ENCODE measurements at regions of chr2 and their contacts with region 1.

Region 1: DNA sequence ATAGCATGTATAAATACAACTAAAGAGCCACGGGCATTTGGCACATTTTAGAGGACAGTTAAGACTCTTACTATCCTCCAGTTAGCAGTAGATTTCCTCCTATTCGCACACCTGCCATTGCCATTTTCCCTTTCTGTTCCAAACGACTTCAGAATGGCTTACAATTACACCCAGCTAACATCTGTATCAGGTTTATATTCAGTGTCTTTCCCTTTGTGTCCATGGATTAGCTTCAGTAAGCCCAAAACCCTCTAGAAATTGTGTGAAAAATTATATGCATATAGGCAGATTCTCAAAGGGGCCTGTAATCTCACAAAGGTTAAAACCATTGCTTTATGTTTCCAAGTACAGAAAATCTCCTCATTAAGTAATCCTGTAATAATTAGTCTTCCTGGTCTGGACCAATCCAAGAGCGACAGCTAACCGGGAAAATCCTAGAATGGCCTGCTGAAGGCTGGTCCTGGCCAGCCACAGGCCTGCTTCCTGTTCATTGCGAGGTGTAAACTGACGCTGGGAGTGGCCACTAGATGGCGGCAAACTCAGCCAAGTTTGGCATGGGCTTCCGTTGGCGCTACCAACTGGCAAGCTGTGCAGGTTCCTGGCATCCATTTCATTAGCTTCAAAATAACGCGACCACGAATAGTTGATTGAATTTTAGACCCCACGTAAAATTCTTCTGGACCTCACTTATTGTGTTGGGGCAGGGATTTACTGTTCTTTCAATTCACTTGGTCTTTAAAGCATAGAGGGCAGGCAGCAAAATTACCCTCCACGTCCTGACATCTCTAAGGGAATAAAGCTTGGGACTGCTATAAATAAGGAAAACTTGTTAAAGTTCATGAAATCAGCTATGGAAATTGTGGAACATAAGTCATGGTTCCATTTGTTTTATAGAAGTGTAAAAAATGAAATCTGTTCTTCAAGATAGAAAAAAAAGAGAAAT is 17.1 kb downstream of the ARHGAP25 start:
- DNase-seq: peak; percentile 88 to 96 (median 90)
- ATAC-seq: peak; percentile 91
- H3K4me3 ChIP-seq: no peak overlapping the region
- H3K4me3 Mint-ChIP-seq: peak overlapping the region; percentile 12
- H3K27ac ChIP-seq: peak overlapping the region; percentile 52 to 66
- H3K27ac Mint-ChIP-seq: peak overlapping the region; percentile 94
- H3K4me1 ChIP-seq: peaks cover 81% of the 10 kb centered on the region
- H3K4me1 Mint-ChIP-seq: peaks cover 86% of the 10 kb centered on the region
- H3K27me3 ChIP-seq: no peaks in the 10 kb centered on the region
- H3K27me3 Mint-ChIP-seq: no peaks in the 10 kb centered on the region
- CTCF ChIP-seq: peak; percentile 93

Region 2: GRCh38 chr2:68715353-68716041 is 36.2 kb before region 1 on chr2:
- CTCF ChIA-PET with region 1: interaction called, 22 read pairs
- POLR2A ChIA-PET with region 1: interaction called, 26 read pairs
- intact Hi-C with region 1: loop called (anchors 5 kb)
- DNase-seq: peak in 4 of 14 experiments; percentile 40 to 78 (median 67)
- ATAC-seq: peak; percentile 44
- H3K4me3 ChIP-seq: no peak overlapping the region
- H3K4me3 Mint-ChIP-seq: no peak overlapping the region
- H3K27ac ChIP-seq: peak overlapping the region in 1 of 2 donors; percentile 65
- H3K27ac Mint-ChIP-seq: peak overlapping the region; percentile 83
- H3K4me1 ChIP-seq: peaks cover 51% of the 10 kb centered on the region
- H3K4me1 Mint-ChIP-seq: peaks cover 82% of the 10 kb centered on the region
- H3K27me3 ChIP-seq: no peaks in the 10 kb centered on the region
- H3K27me3 Mint-ChIP-seq: no peaks in the 10 kb centered on the region
- CTCF ChIP-seq: no peak

Region 3: DNA sequence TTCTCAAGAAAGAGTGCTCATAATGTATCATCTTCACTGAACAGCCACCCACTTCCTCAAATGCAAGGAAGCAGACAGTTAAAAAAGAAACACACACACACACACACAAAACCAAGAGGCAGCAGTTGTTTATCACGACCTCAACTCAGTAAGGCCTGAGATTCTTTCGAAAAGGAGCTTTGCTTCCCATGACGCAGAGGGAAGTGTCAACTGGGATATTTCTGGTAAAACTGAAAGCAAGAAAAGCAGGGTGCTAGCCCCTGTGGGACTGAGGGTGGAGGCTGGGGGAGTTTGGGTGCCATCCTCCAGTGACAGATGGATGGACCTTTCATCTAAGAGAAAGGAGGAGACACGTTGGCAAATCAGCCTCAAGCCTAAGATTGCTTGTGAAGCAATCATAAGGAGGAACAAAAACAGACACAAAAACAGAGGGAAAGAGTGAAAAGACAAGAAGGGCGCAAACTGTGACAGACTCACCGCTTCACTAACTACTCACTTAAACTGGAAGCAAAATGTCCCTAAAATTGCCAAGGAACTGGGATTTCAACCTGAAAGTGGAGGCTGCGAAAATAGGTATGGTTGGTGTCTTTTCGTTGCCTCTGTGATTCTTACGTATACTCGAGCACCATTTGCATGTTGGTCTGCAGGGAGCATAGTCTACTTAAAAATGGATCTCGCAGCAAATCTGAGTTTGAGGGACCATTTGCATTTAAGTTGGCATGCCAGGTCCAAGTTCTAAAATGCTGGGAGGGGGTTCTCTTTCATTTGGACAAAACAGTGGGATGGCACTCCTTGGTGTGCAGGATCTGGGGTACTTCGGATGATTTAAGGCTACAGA is 16.8 kb before region 1 on chr2 and contains the start of gene ARHGAP25:
- CTCF ChIA-PET with region 1: interaction called, 63 read pairs
- POLR2A ChIA-PET with region 1: interaction called, 31 read pairs
- intact Hi-C with region 1: loop called in 1 of 2 experiments (anchors 1 kb)
- DNase-seq: peak in 10 of 14 experiments; percentile 23 to 87 (median 45)
- ATAC-seq: peak; percentile 71
- H3K4me3 ChIP-seq: peak within 1 kb of the TSS; percentile 73
- H3K4me3 Mint-ChIP-seq: no peak within 1 kb of the TSS
- H3K27ac ChIP-seq: peak within 1 kb of the TSS; percentile 72 to 81
- H3K27ac Mint-ChIP-seq: no peak within 1 kb of the TSS
- H3K4me1 ChIP-seq: peaks cover 49% of the 10 kb centered on the region
- H3K4me1 Mint-ChIP-seq: peaks cover 40% of the 10 kb centered on the region
- H3K27me3 ChIP-seq: no peaks in the 10 kb centered on the region
- H3K27me3 Mint-ChIP-seq: no peaks in the 10 kb centered on the region
- CTCF ChIP-seq: no peak
- total RNA-seq, gene ARHGAP25: 39.3 to 41.8 TPM

Region 4: GRCh38 chr2:68789603-68790002 is 37.9 kb after region 1 on chr2:
- CTCF ChIA-PET with region 1: interaction called, 18 read pairs
- POLR2A ChIA-PET with region 1: interaction called, 7 read pairs
- intact Hi-C with region 1: no loop called
- DNase-seq: peak in 2 of 14 experiments; percentile 28 to 53
- ATAC-seq: peak; percentile 26
- H3K4me3 ChIP-seq: no peak overlapping the region
- H3K4me3 Mint-ChIP-seq: no peak overlapping the region
- H3K27ac ChIP-seq: no peak overlapping the region
- H3K27ac Mint-ChIP-seq: peak overlapping the region; percentile 91
- H3K4me1 ChIP-seq: peaks cover 45% of the 10 kb centered on the region
- H3K4me1 Mint-ChIP-seq: peaks cover 49% of the 10 kb centered on the region
- H3K27me3 ChIP-seq: no peaks in the 10 kb centered on the region
- H3K27me3 Mint-ChIP-seq: no peaks in the 10 kb centered on the region
- CTCF ChIP-seq: no peak

Region 5: GRCh38 chr2:68837164-68837860 is 85.6 kb after region 1 on chr2:
- CTCF ChIA-PET with region 1: interaction called, 24 read pairs
- POLR2A ChIA-PET with region 1: interaction called, 5 read pairs
- intact Hi-C with region 1: loop called (anchors 1 kb)
- DNase-seq: peak; percentile 54 to 86 (median 70)
- ATAC-seq: peak; percentile 85
- H3K4me3 ChIP-seq: no peak overlapping the region
- H3K4me3 Mint-ChIP-seq: no peak overlapping the region
- H3K27ac ChIP-seq: no peak overlapping the region
- H3K27ac Mint-ChIP-seq: peak overlapping the region; percentile 4
- H3K4me1 ChIP-seq: peaks cover 27% of the 10 kb centered on the region
- H3K4me1 Mint-ChIP-seq: peaks cover 38% of the 10 kb centered on the region
- H3K27me3 ChIP-seq: no peaks in the 10 kb centered on the region
- H3K27me3 Mint-ChIP-seq: no peaks in the 10 kb centered on the region
- CTCF ChIP-seq: peak; percentile 84

Region 6: DNA sequence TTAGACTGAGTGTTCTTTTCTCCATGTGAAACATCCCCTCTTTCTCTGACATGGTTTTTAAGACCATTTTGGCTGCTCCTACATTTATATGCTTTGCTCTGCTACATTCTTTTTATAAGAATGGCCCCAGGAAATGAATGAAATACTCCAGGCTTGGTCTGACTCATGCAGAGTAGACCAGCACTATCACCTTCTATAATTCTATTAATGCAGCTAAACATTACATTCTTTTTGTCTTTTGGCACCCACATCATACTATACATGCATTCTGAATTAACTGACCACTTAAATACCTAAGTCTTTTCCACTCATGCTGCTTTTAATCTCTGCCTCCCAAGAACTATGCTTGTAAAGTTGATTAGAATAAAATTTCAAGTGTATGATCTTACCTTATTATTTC is 797.8 kb after region 1 on chr2:
- CTCF ChIA-PET with region 1: no interaction called
- POLR2A ChIA-PET with region 1: no interaction called
- intact Hi-C with region 1: no loop called
- DNase-seq: no peak
- ATAC-seq: no peak
- H3K4me3 ChIP-seq: no peak overlapping the region
- H3K4me3 Mint-ChIP-seq: no peak overlapping the region
- H3K27ac ChIP-seq: no peak overlapping the region
- H3K27ac Mint-ChIP-seq: peak overlapping the region; percentile 63
- H3K4me1 ChIP-seq: peaks cover 8% of the 10 kb centered on the region
- H3K4me1 Mint-ChIP-seq: peaks cover 77% of the 10 kb centered on the region
- H3K27me3 ChIP-seq: no peaks in the 10 kb centered on the region
- H3K27me3 Mint-ChIP-seq: no peaks in the 10 kb centered on the region
- CTCF ChIP-seq: no peak